ENCODE measurements at regions of chr9 and their contacts with region 1.

Region 1: GRCh38 chr9:68584189-68585033 is 43.7 kb upstream of the TMEM252 start:
- DNase-seq: peak; percentile 72 to 86
- H3K4me3 ChIP-seq: no peak overlapping the region
- H3K27ac ChIP-seq: no peak overlapping the region
- H3K4me1 ChIP-seq: no peaks in the 10 kb centered on the region
- H3K27me3 ChIP-seq: no peaks in the 10 kb centered on the region
- CTCF ChIP-seq: peak; percentile 97 to 98

Region 2: GRCh38 chr9:68704814-68705530 is 120.6 kb after region 1 on chr9 and contains the start of gene PIP5K1B:
- intact Hi-C with region 1: loop called (anchors 10 kb)
- DNase-seq: peak; percentile 28 to 80
- H3K4me3 ChIP-seq: peak within 1 kb of the TSS; percentile 66 to 71
- H3K27ac ChIP-seq: peak within 1 kb of the TSS; percentile 75 to 78
- H3K4me1 ChIP-seq: peaks cover 0 to 28% (median 18%) of the 10 kb centered on the region in 4 donors
- H3K27me3 ChIP-seq: no peaks in the 10 kb centered on the region
- CTCF ChIP-seq: peak in 1 of 2 experiments; percentile 11

Region 3: GRCh38 chr9:68844631-68845612 is 260.5 kb after region 1 on chr9:
- intact Hi-C with region 1: loop called (anchors 10 kb)
- DNase-seq: peak in 1 of 2 donors; percentile 36
- H3K4me3 ChIP-seq: no peak overlapping the region
- H3K27ac ChIP-seq: no peak overlapping the region
- H3K4me1 ChIP-seq: peaks cover 0 to 36% (median 10%) of the 10 kb centered on the region in 4 donors
- H3K27me3 ChIP-seq: no peaks in the 10 kb centered on the region
- CTCF ChIP-seq: peak; percentile 53 to 56

Region 4: GRCh38 chr9:68951879-68952659 is 367.7 kb after region 1 on chr9:
- intact Hi-C with region 1: loop called (anchors 5 kb)
- DNase-seq: no peak
- H3K4me3 ChIP-seq: no peak overlapping the region
- H3K27ac ChIP-seq: no peak overlapping the region
- H3K4me1 ChIP-seq: peaks cover 0 to 6% (median 3%) of the 10 kb centered on the region in 4 donors
- H3K27me3 ChIP-seq: no peaks in the 10 kb centered on the region
- CTCF ChIP-seq: no peak

Region 5: DNA sequence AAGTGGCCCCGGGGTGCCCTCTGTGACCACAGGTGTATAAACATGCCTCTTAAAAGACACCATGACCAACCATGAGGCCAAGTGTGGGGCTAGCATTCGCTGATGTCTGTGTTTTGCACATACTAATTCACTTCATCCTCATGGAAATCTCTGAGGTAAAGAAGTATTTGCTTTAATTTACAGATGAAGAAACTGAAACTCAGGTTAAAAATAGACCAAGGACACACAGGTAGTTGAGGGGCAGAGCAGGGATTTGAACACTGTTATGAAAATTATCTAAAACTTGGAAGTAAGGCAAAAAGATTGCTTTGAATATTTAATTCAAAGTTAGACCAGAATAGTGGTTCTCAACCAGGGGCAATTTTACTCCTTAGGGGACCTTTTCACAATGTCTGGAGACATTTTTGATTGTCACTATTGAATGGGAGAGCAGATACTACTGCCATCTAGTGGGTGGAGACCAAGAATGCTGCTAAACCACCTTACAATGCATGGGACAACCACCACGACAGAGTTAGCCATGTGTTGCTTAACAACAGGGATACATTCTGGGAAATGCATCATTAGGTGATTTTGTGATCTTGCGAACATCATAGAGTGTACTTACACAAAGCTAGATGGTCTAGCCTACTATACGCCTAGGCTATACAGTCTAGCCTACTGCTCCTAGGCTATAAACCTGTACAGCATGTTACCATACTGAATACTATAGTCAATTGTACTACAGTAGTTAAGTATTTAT is 443.1 kb after region 1 on chr9:
- intact Hi-C with region 1: loop called (anchors 10 kb)
- DNase-seq: no peak
- H3K4me3 ChIP-seq: no peak overlapping the region
- H3K27ac ChIP-seq: no peak overlapping the region
- H3K4me1 ChIP-seq: no peaks in the 10 kb centered on the region
- H3K27me3 ChIP-seq: no peaks in the 10 kb centered on the region
- CTCF ChIP-seq: peak; percentile 56 to 70